PC-9 (cell line): ENCODE measurements at regions of chr15 and their contacts with region 1.

Region 1: DNA sequence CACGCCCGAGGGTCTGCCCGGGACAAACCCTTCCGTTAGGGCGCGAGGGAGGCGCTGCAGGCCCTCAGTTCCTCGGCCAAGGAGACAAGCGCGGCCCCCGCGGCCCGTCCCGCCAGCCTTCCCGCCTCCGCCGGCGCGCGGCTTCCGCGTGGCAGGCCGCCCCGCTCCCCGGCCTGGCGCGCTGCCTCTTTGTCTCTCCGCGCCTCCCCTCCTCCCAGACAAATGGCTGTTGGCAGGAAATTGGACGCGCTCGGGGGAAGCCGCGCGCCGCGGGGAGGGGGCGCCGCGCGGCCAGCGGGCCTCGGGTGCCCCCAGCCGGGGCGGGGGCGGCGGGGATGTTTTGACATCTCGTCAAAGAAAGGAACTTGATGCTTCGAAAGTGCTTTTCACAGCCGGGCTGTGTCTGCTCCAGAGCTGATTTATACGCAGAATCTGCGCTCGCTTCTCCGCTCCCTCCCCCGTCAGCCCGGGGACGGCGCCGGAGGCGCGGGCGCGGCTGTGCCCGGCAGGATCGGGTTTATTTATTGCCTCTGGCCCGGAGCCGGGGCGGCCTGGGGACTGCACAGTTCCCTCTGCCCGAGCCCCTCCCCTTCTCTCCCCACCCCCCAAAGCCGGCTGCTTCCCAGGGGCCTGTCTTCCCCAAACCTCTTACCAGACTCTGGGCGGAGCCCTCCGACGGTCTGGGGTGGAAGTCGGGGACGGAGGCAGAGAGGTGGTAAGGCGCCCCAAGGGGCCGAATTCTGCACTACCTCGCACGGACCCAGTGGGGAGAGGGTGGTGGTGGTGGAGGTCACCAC is 20.7 kb downstream of the SHF start:
- DNase-seq: peak; percentile 57 to 79
- H3K4me3 ChIP-seq: peak overlapping the region; percentile 62; the same call in 1 of the 2 replicates
- H3K27ac ChIP-seq: peak overlapping the region; percentile 32; the same call in 1 of the 2 replicates
- H3K4me1 ChIP-seq: peaks cover 11% of the 10 kb centered on the region
- H3K27me3 ChIP-seq: no peaks in the 10 kb centered on the region
- CTCF ChIP-seq: peak; percentile 71

Region 2: GRCh38 chr15:45091161-45091560 is 75.9 kb before region 1 on chr15:
- CTCF ChIA-PET with region 1: no interaction called
- POLR2A ChIA-PET with region 1: no interaction called
- intact Hi-C with region 1: no loop called
- DNase-seq: no peak
- H3K4me3 ChIP-seq: no peak overlapping the region
- H3K27ac ChIP-seq: no peak overlapping the region
- H3K4me1 ChIP-seq: no peaks in the 10 kb centered on the region
- H3K27me3 ChIP-seq: peaks cover 3% of the 10 kb centered on the region; the same call in 1 of the 2 replicates
- CTCF ChIP-seq: no peak

Region 3: GRCh38 chr15:45118131-45118588 is 48.9 kb before region 1 on chr15:
- CTCF ChIA-PET with region 1: interaction called, 11 read pairs
- POLR2A ChIA-PET with region 1: no interaction called
- intact Hi-C with region 1: no loop called
- DNase-seq: peak; percentile 70 to 87
- H3K4me3 ChIP-seq: no peak overlapping the region
- H3K27ac ChIP-seq: no peak overlapping the region
- H3K4me1 ChIP-seq: peaks cover 14% of the 10 kb centered on the region; the same call in 1 of the 2 replicates
- H3K27me3 ChIP-seq: peaks cover 3% of the 10 kb centered on the region; the same call in 1 of the 2 replicates
- CTCF ChIP-seq: peak; percentile 88

Region 4: DNA sequence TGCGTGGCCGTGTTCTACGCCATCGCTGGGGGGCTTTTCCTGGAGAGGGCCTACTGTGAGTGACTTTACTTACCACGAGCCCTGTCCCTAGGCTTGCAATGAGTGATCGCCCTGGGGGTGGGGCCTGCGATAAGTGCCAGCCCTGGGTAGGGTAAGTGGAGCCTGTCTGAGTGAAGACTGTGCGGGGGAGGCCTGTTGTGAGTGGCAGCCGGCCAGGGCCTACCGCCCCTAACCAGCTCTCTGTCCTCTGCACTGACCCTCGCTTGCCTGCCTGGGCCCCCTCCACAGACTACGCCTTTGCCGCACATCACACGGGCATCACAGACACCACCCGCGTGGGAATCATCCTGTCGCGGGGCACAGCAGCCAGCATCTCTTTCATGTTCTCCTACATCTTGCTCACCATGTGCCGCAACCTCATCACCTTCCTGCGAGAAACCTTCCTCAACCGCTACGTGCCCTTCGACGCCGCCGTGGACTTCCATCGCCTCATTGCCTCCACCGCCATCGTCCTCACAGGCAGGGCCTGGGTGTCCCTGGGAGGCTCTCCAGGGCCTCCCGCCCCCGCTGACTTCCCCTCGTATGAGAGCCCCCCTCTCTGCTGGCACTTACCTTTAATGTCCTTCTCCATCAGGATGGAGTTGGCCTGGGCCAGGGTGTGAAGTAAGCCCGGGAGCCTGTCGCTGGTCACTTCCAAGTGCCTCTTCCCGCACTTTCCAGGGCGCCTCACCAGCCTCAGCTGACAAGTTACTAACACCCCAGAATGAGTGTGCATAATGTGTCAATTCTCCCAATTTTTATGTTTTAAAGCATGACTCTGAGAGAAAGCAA is 14.8 kb before region 1 on chr15:
- CTCF ChIA-PET with region 1: interaction called, 17 read pairs
- POLR2A ChIA-PET with region 1: no interaction called
- intact Hi-C with region 1: no loop called
- DNase-seq: no peak
- H3K4me3 ChIP-seq: no peak overlapping the region
- H3K27ac ChIP-seq: no peak overlapping the region
- H3K4me1 ChIP-seq: peaks cover under 1% of the 10 kb centered on the region
- H3K27me3 ChIP-seq: no peaks in the 10 kb centered on the region
- CTCF ChIP-seq: no peak

Region 5: DNA sequence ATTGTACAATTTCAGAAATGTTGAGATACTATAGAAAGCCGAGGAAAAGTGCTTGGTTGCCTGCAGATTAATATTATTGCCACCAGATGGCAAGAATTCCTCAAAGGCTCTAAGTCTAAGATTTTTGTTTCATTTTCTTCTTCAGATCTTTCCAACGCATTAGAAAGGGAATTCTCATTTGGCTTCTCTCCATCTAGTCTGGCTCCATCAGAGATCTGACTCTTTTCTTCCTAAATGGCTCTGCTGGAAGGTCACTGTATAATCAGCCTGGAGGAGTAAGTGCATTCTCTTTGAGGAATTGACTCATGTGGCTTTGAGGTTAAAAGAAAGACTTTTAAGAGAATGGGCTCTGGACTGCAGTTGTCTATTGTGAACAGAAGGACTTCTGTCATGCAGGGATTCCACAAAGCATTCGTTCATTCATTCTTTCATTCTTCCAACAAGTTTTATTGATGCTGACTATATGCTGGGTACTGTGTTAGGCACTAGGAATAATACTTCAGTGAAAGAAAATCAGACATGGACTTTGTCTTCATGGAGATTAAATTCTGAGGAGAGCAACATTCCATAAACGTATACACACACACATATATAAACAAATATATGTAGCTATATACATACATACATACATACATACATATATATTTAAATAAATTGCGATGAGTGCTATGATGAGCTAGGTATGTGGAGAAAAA is 140.3 kb after region 1 on chr15:
- CTCF ChIA-PET with region 1: no interaction called
- POLR2A ChIA-PET with region 1: no interaction called
- intact Hi-C with region 1: loop called (anchors 1 kb)
- DNase-seq: peak; percentile 3 to 40
- H3K4me3 ChIP-seq: no peak overlapping the region; the same call in 1 of the 2 replicates
- H3K27ac ChIP-seq: no peak overlapping the region
- H3K4me1 ChIP-seq: no peaks in the 10 kb centered on the region
- H3K27me3 ChIP-seq: no peaks in the 10 kb centered on the region
- CTCF ChIP-seq: peak; percentile 59

Region 6: GRCh38 chr15:45429974-45430792 is 263.2 kb after region 1 on chr15:
- CTCF ChIA-PET with region 1: interaction called, 7 read pairs
- POLR2A ChIA-PET with region 1: no interaction called
- intact Hi-C with region 1: loop called (anchors 1 kb)
- DNase-seq: peak in 1 of 2 experiments; percentile 74
- H3K4me3 ChIP-seq: peak overlapping the region; percentile 51; the same call in 1 of the 2 replicates
- H3K27ac ChIP-seq: no peak overlapping the region
- H3K4me1 ChIP-seq: peaks cover 11% of the 10 kb centered on the region
- H3K27me3 ChIP-seq: no peaks in the 10 kb centered on the region
- CTCF ChIP-seq: peak; percentile 99

Region 7: GRCh38 chr15:45611305-45611704 is 444.3 kb after region 1 on chr15:
- CTCF ChIA-PET with region 1: no interaction called
- POLR2A ChIA-PET with region 1: no interaction called
- intact Hi-C with region 1: loop called (anchors 2 kb)
- DNase-seq: peak in 1 of 2 experiments; percentile 35
- H3K4me3 ChIP-seq: no peak overlapping the region
- H3K27ac ChIP-seq: no peak overlapping the region
- H3K4me1 ChIP-seq: peaks cover 3% of the 10 kb centered on the region; the same call in 1 of the 2 replicates
- H3K27me3 ChIP-seq: no peaks in the 10 kb centered on the region
- CTCF ChIP-seq: peak; percentile 68

Region 8: GRCh38 chr15:45648521-45649200 is 481.6 kb after region 1 on chr15:
- CTCF ChIA-PET with region 1: no interaction called
- POLR2A ChIA-PET with region 1: no interaction called
- intact Hi-C with region 1: no loop called
- DNase-seq: peak; percentile 37 to 77
- H3K4me3 ChIP-seq: no peak overlapping the region
- H3K27ac ChIP-seq: peak overlapping the region; percentile 60
- H3K4me1 ChIP-seq: peaks cover 27% of the 10 kb centered on the region
- H3K27me3 ChIP-seq: no peaks in the 10 kb centered on the region
- CTCF ChIP-seq: no peak